GM12878 (cell line): ENCODE measurements at regions of chr5 and their contacts with region 1.

Region 1: DNA sequence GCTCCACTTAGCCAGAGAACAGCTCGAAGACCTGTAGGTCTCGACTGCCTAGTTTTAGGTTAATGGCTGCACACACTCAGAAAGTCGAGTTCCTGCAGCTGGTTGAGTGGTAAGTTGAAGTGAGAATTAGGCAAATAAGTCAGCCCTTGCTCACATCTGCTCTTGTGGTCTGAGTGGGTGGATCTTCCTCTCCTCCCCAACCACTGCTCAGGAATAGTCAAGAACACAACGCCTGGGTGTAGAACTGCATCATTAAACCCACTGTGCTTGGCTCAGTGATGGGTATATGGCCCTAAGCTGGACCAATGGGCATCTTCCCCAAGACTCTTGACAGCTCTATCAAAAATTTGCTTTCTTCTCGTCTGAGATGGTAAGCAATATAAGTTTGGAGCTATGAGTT is 20.9 kb upstream of the ADAM19 start:
- DNase-seq: peak; percentile 96
- ATAC-seq: peak; percentile 73
- H3K4me3 ChIP-seq: no peak overlapping the region
- H3K27ac ChIP-seq: peak overlapping the region; percentile 79
- H3K4me1 ChIP-seq: peaks cover 88% of the 10 kb centered on the region
- H3K27me3 ChIP-seq: no peaks in the 10 kb centered on the region
- CTCF ChIP-seq: no peak
- EP300 ChIP-seq: peak; percentile 79 to 81
- POLR2A ChIP-seq: no peak
- RAD21 ChIP-seq: no peak

Region 2: DNA sequence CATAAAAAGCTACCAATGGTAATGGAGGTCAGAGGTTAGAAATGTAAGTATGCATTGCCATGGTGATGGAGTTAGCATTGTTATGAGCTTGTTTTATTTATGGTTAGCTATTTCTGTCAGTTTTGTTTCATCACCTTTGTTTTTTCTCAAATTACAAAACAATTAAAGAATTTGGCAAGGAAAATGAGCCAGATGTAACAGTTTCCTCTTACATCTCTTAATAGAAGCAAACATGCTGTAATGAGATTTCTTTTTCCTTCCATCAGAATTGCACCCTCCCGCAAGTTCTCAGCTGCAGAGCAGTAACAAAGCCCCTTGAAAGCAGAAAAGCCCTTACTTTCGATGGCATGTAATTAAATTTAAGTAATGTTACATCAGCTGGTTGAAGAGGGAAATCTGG is 1036.5 kb before region 1 on chr5:
- CTCF ChIA-PET with region 1: no interaction called
- POLR2A ChIA-PET with region 1: no interaction called
- RAD21 ChIA-PET with region 1: no interaction called
- SMC1A ChIA-PET with region 1: no interaction called
- in situ Hi-C with region 1: no loop called
- intact Hi-C with region 1: no loop called
- DNase-seq: no peak
- ATAC-seq: no peak
- H3K4me3 ChIP-seq: no peak overlapping the region
- H3K27ac ChIP-seq: no peak overlapping the region
- H3K4me1 ChIP-seq: no peaks in the 10 kb centered on the region
- H3K27me3 ChIP-seq: no peaks in the 10 kb centered on the region; a peak in 1 of 4 replicates
- CTCF ChIP-seq: no peak
- EP300 ChIP-seq: no peak
- POLR2A ChIP-seq: no peak
- RAD21 ChIP-seq: no peak

Region 3: DNA sequence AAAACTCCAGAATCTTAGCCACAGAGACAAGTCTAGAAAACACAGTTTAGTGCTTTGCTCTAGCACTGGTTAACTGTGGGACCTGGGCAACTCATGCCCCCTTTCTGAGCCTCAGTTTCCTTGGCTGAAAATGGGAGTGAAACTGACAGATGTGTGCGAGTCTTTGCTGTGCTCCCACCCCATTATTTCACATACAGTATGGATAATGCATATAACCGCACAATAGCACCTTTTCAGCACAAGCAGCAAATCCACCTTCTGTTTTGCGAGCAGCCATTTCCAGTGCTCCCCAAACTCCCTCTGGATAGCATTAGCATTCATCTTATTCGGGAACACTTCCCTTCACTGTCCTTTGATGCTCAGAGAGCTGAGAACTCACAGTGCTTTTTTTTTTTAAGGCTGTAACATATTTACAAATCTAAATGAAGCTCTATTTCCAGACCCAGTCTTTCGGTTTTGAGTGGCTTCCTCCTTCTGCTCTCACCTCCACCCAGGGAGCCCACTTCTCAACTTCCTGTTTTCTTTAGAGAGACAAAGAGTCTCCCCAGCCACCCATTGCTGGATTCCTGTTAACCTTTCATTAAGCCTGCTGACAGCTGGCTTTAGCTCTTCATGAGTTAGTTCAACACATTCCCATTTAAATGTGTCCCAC is 682.6 kb before region 1 on chr5:
- CTCF ChIA-PET with region 1: no interaction called
- POLR2A ChIA-PET with region 1: no interaction called
- RAD21 ChIA-PET with region 1: no interaction called
- SMC1A ChIA-PET with region 1: no interaction called
- in situ Hi-C with region 1: no loop called
- intact Hi-C with region 1: loop called (anchors 10 kb)
- DNase-seq: peak; percentile 68
- ATAC-seq: peak; percentile 87
- H3K4me3 ChIP-seq: peak overlapping the region; percentile 46; the same call in 1 of the 2 replicates
- H3K27ac ChIP-seq: peak overlapping the region; percentile 89
- H3K4me1 ChIP-seq: peaks cover 17% of the 10 kb centered on the region
- H3K27me3 ChIP-seq: no peaks in the 10 kb centered on the region
- CTCF ChIP-seq: no peak
- EP300 ChIP-seq: no peak
- POLR2A ChIP-seq: no peak
- RAD21 ChIP-seq: no peak

Region 4: GRCh38 chr5:157502143-157502647 is 94.3 kb before region 1 on chr5:
- CTCF ChIA-PET with region 1: no interaction called
- POLR2A ChIA-PET with region 1: interaction called, 6 read pairs
- RAD21 ChIA-PET with region 1: interaction called, 9 read pairs
- SMC1A ChIA-PET with region 1: interaction called, 5 read pairs
- in situ Hi-C with region 1: no loop called
- intact Hi-C with region 1: loop called (anchors 1 kb)
- DNase-seq: peak; percentile 82
- ATAC-seq: peak; percentile 83
- H3K4me3 ChIP-seq: no peak overlapping the region
- H3K27ac ChIP-seq: peak overlapping the region; percentile 89
- H3K4me1 ChIP-seq: peaks cover 70% of the 10 kb centered on the region
- H3K27me3 ChIP-seq: no peaks in the 10 kb centered on the region
- CTCF ChIP-seq: no peak
- EP300 ChIP-seq: peak; percentile 51 to 88; a peak in 3 of 4 replicates
- POLR2A ChIP-seq: no peak
- RAD21 ChIP-seq: 0 out of 2 replicates have a peak, but pooled peaks have one; percentile 13

Region 5: DNA sequence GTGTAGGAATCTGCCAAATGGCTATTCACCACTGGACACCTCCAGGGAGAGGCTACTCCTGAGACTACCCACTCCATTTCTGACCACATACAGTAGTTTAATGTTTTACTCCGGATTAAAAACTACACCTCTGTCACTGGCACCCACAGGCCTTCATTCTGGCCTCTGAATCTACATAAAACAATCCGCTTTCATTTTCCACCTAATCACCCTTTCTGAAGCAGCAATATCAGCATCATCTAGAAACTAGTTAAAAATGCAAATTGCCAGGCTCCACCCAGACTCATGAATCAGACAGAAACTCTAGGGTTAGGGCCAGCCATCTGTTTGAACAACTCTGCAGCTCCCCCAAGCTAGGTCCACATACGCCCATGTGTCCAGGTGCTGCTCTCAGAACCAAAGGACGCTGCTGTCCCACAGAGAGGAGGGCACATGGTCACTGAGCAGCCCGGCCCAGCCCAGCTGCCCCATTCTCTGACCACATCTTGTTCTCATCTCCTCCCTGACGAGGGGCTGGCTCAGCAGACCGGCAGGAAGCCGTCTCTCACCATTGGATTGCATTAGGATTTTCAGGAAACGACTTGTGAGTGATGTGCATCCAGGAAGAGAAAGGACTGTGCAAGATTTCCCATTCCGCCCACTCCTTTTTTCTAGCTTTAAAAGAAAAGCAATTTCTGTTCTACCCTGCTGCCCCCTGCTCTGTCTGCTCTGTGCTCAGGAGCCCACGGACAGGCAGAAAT is 55.6 kb before region 1 on chr5:
- CTCF ChIA-PET with region 1: interaction called, 5 read pairs
- POLR2A ChIA-PET with region 1: interaction called, 5 read pairs
- RAD21 ChIA-PET with region 1: interaction called, 36 read pairs
- SMC1A ChIA-PET with region 1: interaction called, 39 read pairs
- in situ Hi-C with region 1: no loop called
- intact Hi-C with region 1: loop called (anchors 1 kb)
- DNase-seq: peak; percentile 87
- ATAC-seq: peak; percentile 93
- H3K4me3 ChIP-seq: peak overlapping the region; percentile 56
- H3K27ac ChIP-seq: peak overlapping the region; percentile 92
- H3K4me1 ChIP-seq: peaks cover 49% of the 10 kb centered on the region
- H3K27me3 ChIP-seq: no peaks in the 10 kb centered on the region
- CTCF ChIP-seq: no peak
- EP300 ChIP-seq: peak; percentile 50 to 64; a peak in 2 of 4 replicates
- POLR2A ChIP-seq: peak; percentile 51
- RAD21 ChIP-seq: peak; percentile 12; the same call in 1 of the 2 replicates

Region 6: GRCh38 chr5:157575381-157576020 is 21.0 kb before region 1 on chr5 and contains the start of gene ADAM19:
- CTCF ChIA-PET with region 1: interaction called, 7 read pairs
- POLR2A ChIA-PET with region 1: interaction called, 12 read pairs
- RAD21 ChIA-PET with region 1: interaction called, 89 read pairs
- SMC1A ChIA-PET with region 1: interaction called, 146 read pairs
- in situ Hi-C with region 1: no loop called
- intact Hi-C with region 1: loop called (anchors 2 kb)
- DNase-seq: no peak
- ATAC-seq: peak; percentile 77
- H3K4me3 ChIP-seq: peak within 1 kb of the TSS; percentile 75
- H3K27ac ChIP-seq: peak within 1 kb of the TSS; percentile 67
- H3K4me1 ChIP-seq: peaks cover 51% of the 10 kb centered on the region
- H3K27me3 ChIP-seq: no peaks in the 10 kb centered on the region
- CTCF ChIP-seq: no peak
- EP300 ChIP-seq: no peak
- POLR2A ChIP-seq: peak; percentile 79
- RAD21 ChIP-seq: no peak
- polyA plus RNA-seq, gene ADAM19: 16.0 to 24.4 TPM

Region 7: DNA sequence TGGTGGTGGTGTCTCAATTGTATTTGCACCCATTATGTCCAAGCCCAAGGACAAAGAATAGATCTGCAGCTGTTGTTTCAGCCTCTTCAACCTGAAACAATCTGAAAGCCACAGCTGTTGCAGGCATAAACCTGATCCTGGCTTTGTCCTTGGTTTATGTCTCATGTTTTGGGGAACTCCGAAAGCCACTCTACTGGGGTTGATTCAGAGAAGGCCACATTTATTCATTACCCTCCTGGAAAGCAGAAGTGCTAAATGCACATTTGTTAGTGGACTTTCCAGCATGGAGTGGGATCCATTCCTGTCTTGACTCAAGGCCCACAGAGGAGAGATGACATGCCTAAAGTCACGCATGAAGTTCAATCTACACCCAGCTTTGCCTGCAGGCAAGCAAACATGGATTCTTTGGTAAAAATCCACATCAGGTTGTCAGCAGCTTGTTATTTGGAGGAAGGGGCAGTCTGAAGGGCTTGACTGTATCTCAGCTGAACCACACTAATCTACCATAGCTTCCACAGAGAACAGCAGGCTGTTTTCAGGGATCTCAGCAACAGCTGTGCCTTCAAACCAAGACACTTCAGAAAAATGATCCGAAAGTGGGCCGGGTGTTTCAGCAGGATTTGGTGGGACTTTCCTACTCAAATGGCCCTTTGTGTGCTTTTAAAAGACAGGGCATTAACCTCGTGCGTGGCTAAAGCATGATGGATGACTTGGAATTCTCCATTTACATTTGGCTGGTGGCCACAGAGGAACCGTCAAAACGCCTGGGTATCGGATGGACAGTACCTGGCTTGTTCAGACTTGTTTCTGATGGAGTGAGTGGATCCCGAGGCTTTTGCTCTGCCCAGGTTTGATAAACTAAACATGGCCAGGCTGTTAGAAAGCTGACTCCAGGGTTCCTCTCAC is 15.3 kb after region 1 on chr5:
- CTCF ChIA-PET with region 1: interaction called, 13 read pairs
- POLR2A ChIA-PET with region 1: interaction called, 25 read pairs
- RAD21 ChIA-PET with region 1: interaction called, 90 read pairs
- SMC1A ChIA-PET with region 1: interaction called, 142 read pairs
- in situ Hi-C with region 1: no loop called
- intact Hi-C with region 1: loop called (anchors 2 kb)
- DNase-seq: peak; percentile 79
- ATAC-seq: peak; percentile 82
- H3K4me3 ChIP-seq: no peak overlapping the region
- H3K27ac ChIP-seq: peak overlapping the region; percentile 69
- H3K4me1 ChIP-seq: peaks cover 38% of the 10 kb centered on the region
- H3K27me3 ChIP-seq: no peaks in the 10 kb centered on the region
- CTCF ChIP-seq: no peak
- EP300 ChIP-seq: peak; percentile 46 to 80; a peak in 1 of 4 replicates
- POLR2A ChIP-seq: no peak
- RAD21 ChIP-seq: no peak

Region 8: GRCh38 chr5:157858527-157859226 is 262.2 kb after region 1 on chr5 and contains the start of gene CLINT1:
- CTCF ChIA-PET with region 1: interaction called, 3 read pairs
- POLR2A ChIA-PET with region 1: no interaction called
- RAD21 ChIA-PET with region 1: no interaction called
- SMC1A ChIA-PET with region 1: interaction called, 3 read pairs
- in situ Hi-C with region 1: no loop called
- intact Hi-C with region 1: loop called (anchors 10 kb)
- DNase-seq: no peak
- ATAC-seq: peak; percentile 69
- H3K4me3 ChIP-seq: peak within 1 kb of the TSS; percentile 87
- H3K27ac ChIP-seq: peak within 1 kb of the TSS; percentile 45
- H3K4me1 ChIP-seq: peaks cover 29% of the 10 kb centered on the region
- H3K27me3 ChIP-seq: no peaks in the 10 kb centered on the region
- CTCF ChIP-seq: no peak
- EP300 ChIP-seq: 0 out of 4 replicates have a peak, but pooled peaks of 1 of the 2 experiments have one; percentile 4
- POLR2A ChIP-seq: peak; percentile 82
- RAD21 ChIP-seq: no peak
- polyA plus RNA-seq, gene CLINT1: 30.0 to 40.2 TPM